GM10248 (cell line): ENCODE measurements at regions of chr2 and their contacts with region 1.

Region 1: GRCh38 chr2:75608684-75609333 is 37.8 kb upstream of the MRPL19 start:
- DNase-seq: peak; percentile 77
- CTCF ChIP-seq: peak; percentile 97

Region 2: DNA sequence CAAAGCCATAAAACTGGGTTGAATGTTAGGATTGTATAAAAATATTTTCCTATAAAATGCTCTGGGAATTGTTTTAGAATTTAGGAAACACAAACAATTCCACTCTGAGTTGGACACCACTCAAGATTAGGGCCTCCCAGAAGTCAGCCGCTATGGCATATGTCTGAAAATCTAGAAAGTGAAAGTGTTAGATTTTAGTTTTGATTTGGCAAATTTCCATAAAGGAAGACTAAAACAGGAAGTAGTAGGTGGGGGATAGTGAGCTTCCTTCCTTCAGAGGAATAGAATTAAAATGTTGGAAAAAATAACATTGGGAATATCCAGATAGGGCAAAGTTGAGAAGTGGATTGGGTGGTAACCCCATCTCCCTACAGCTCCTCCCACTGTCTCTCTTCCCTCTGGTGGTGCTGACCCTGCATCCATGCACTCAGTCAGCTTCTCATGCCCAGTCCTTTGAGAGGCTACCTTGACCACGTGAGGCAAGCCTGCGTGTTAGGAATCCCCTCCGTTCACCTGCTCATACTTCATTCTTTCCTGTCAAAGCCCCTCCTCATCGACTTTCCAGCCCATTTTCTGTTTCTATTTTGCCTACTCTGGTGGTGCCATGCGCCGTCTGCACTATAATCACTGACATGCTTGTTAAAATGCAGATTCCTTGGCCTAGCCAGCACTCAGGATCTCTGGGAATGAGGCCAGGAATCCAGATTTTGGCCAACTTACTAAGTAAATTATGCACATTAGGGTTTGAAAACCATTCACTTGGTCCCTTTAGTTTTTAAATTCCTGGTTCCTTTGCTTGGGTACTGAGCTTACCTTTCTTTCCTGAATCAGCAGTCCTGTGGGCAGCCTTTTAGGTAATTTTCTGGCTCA is 566.8 kb before region 1 on chr2:
- CTCF ChIA-PET with region 1: interaction called, 10 read pairs
- POLR2A ChIA-PET with region 1: no interaction called
- DNase-seq: no peak
- CTCF ChIP-seq: no peak

Region 3: GRCh38 chr2:75199428-75200011 is 409.3 kb before region 1 on chr2 and contains the start of gene TACR1:
- CTCF ChIA-PET with region 1: interaction called, 13 read pairs
- POLR2A ChIA-PET with region 1: no interaction called
- DNase-seq: peak; percentile 64
- CTCF ChIP-seq: peak; percentile 76

Region 4: DNA sequence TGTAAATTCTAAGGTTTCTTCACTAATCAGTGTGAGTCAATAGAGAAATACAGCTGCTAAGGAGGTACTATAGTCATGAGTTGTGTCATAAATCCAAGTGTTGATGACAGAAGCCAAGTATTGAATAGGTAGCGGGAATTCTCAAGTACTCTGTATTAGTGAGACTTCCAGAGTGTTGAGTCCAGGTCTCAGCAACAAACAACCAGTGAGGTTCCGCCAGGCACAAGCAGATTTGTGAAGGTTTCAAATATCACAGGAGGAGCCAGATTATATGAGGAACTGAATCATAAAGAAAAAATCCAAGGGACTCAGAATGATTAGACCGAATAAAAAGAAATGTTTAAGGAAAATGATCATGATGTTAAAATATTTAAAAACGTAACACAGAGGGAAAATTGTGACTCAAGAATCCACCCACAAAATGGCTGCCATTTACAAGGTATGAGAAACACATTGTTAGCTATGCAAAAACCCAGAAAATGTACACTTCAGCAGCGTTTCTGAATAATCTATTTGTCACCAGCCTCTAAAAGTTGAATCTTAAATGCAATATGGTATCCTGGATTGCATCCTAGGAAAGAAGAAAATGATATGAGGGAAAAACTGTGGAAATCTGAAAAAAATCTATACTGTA is 20.7 kb before region 1 on chr2:
- CTCF ChIA-PET with region 1: interaction called, 14 read pairs
- POLR2A ChIA-PET with region 1: no interaction called
- DNase-seq: no peak
- CTCF ChIP-seq: no peak

Region 5: DNA sequence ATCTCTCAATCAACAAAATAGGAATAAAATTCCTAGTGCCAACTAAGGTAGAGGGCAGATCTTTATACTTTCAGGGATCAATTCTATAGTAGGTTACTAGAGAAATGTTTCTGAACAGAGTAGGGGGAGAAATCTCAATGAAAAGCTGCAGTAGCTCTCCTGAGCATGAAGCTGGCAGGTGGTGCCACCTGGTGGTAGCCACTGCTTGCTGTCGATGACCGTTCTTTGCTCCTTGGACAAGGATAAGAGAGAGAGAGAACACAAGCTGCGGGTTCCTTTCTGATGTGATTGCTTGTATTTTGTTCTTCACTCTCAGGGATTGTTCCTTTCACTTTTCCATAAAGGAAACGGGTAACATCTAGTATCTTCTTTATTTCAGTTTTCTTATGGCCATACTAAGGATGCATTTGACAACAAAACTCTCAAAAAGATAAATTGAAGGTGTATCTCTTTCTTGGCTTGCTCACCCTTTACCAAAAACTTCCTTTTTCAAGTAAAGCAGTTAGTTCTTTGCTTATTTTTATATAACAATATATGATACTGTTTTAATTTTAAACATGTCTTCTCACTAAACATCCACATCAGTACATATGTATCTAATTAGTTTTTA is 19.2 kb after region 1 on chr2:
- CTCF ChIA-PET with region 1: interaction called, 17 read pairs
- POLR2A ChIA-PET with region 1: no interaction called
- DNase-seq: peak; percentile 68
- CTCF ChIP-seq: peak; percentile 95